ENCODE measurements at regions of chr6 and their contacts with region 1.

Region 1: DNA sequence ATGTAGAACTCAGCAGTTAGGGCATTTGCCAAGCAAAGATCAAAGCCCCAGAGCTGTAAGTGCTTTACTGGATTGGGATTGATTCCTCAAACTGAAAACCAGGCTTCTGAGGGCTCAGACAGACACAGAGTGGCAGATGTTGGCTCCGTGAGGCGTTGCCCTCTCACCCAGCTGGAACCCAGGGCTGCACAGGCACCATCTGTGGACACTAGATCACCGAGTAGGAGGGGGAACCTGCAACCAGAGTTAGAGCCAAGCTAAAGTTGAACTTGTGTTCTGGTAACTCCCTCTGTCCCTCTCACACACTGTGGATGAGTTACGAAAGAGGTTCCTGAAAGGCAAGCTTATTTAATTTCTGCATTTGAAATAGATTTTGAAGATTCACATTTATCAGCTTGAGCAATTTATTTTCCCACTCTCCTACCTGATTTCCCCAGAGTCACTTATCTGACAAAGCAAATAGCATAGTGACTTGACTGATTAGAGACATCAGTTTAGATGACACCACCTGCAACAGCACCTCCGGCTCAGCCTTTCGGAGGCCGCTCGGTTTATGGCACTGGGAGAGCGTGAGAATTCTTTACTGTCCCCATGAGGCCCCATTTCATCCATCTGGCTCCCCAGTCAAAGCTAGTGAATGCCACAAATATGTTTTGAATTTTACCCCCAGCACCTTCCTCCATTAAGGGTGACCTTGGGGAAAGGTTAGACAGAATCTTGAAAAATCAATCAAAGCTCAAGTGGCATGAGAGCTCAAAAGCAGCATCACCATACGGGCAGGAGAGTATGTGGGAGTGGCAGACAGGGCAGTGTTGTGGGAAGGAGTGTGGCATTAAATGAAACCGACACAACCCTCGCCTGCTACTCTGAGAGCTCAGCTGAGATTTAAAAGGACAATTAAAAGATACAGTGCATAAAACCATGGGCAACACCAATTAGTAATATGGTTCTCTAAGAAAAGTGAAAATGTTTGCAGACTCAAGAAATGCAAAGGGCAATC is 48.5 kb downstream of the RPF2 start:
- DNase-seq: no peak
- CTCF ChIP-seq: no peak

Region 2: GRCh38 chr6:110296241-110297025 is 733.9 kb before region 1 on chr6:
- CTCF ChIA-PET with region 1: no interaction called
- POLR2A ChIA-PET with region 1: no interaction called
- DNase-seq: no peak
- CTCF ChIP-seq: no peak

Region 3: DNA sequence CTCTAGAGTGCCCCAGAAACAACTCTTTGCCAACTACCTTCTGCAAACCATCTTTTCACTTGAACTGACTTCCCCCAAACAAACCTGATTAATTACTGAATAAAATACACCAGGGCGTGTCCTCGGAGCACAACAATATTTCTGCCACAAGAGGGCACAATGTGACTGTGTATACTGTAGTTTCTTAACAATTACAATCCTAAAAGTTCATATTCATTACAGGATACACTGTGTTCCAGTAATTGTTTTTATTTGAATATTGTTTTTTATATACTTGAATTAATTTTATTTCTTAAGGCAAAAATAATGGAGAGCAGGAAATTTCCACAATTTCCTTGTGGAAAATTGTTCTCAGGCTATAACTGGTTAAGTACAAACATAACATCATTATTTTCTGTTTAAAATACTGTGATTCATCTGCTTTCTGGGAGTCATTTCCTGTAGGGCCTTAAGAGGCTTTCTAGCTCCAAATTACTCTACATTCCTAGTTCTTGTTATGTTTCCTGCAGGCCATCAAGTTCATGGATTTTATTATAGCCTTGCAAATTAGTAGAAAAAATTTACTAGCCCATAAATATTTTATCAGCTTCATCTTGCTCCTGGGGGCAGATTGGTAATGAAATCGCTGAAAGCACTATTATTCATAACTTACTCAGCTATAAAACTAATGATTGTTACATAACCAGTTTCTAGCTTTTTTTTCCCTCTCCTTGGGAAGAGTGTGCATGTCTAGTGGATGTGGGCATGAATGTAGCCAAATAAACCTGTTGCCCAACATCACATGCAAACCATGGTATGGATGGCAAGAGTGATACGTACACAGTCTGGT is 502.0 kb before region 1 on chr6:
- CTCF ChIA-PET with region 1: interaction called, 13 read pairs
- POLR2A ChIA-PET with region 1: no interaction called
- DNase-seq: peak; percentile 62
- CTCF ChIP-seq: peak; percentile 75

Region 4: GRCh38 chr6:111011360-111012142 is 18.8 kb before region 1 on chr6:
- CTCF ChIA-PET with region 1: interaction called, 48 read pairs
- POLR2A ChIA-PET with region 1: no interaction called
- DNase-seq: peak; percentile 58
- CTCF ChIP-seq: peak; percentile 58

Region 5: GRCh38 chr6:111057074-111057752 is 26.9 kb after region 1 on chr6:
- CTCF ChIA-PET with region 1: interaction called, 12 read pairs
- POLR2A ChIA-PET with region 1: no interaction called
- DNase-seq: peak; percentile 48
- CTCF ChIP-seq: peak; percentile 84